ENCODE measurements at regions of chr17 and their contacts with region 1.

Region 1: DNA sequence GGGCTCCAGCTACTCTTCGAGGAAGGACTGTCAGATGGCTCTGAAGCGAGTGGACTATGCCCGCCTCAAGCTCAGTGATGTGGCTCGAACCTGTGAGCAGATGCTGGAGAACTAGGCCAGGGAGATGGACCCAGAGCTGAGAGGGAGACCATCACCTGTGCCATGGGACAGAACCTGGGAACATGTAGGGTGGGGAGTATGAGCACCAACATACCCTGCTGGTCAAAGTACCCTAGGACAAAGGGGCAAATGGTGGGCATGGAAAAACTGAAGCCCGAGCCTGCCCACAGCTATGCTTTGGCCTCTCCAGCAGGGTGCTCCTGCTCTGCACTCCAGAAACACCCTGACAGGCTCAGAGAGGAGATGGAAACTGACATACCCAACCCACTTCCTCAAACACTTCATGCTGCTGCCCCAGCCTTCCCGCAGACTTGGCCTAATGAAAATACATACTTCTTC is 1.9 kb downstream of the MED11 start:
- DNase-seq: no peak
- H3K4me3 ChIP-seq: no peak overlapping the region
- H3K27ac ChIP-seq: peak overlapping the region; percentile 16 to 40
- H3K4me1 ChIP-seq: peaks cover 6 to 9% of the 10 kb centered on the region in 2 donors
- H3K27me3 ChIP-seq: no peaks in the 10 kb centered on the region
- CTCF ChIP-seq: no peak

Region 2: DNA sequence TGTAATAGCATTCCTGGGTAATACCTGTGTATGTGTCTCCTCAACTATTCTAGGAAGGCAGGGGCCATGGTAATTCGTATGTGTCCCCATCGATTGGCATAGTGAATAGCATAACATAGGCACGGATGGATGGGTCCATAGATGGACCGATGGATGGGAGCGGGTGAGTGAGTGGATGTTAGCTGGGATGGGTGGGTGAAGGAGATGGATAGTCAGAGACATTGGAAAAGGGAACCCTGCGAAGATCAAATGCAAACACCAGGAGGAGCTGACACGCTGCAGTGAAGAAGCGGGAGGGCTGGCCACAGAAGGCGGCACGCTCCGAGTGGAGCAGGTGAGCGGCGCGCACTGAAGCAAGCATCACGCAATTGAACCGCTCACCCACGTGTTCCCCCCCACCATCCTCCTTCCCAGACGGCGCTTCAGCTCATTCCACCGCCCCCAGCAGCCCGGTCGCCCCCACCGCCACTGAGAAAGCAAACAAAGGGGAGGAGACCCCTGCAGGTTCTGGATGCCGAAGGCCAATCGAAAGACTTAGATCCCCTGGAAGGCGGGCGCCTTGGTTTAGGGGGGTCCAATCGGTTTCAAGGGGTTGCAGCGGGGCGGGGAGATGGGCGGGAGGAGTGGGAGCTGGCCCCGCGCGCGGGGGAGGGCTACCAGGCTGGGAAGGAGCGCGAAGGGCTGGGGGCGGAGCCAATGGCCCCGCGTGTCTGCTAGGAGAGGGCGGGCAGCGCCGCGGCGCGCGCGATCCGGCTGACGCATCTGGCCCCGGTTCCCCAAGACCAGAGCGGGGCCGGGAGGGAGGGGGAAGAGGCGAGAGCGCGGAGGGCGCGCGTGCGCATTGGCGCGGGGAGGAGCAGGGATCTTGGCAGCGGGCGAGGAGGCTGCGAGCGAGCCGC is 23.1 kb before region 1 on chr17 and contains the start of gene ARRB2:
- intact Hi-C with region 1: loop called (anchors 1 kb)
- DNase-seq: peak; percentile 97 to 99
- H3K4me3 ChIP-seq: peak within 1 kb of the TSS; percentile 52 to 77
- H3K27ac ChIP-seq: peak within 1 kb of the TSS; percentile 67 to 75
- H3K4me1 ChIP-seq: peaks cover 0 to 5% of the 10 kb centered on the region in 2 donors
- H3K27me3 ChIP-seq: no peaks in the 10 kb centered on the region
- CTCF ChIP-seq: peak; percentile 40 to 84 (median 62)
- total RNA-seq, gene ARRB2: 43.4 TPM

Region 3: DNA sequence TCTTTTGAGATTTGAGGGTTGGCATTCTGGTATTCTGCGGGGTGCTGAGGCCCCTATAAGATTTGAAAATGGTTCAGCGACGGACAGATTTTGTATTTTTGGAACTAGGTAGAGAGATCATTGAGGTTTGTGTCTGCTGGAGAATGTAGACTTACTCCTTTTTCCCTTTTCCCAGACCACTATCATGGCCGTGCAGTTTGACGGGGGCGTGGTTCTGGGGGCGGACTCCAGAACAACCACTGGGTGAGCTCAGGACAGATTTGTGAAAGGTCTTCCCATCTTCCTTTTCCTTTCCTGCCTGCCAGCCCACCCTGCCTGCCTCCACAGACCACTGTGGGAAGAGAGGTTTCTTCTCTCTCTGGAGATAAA is 63.4 kb after region 1 on chr17:
- intact Hi-C with region 1: loop called (anchors 2 kb)
- DNase-seq: no peak
- H3K4me3 ChIP-seq: peak overlapping the region; percentile 69 to 86
- H3K27ac ChIP-seq: peak overlapping the region; percentile 67 to 83
- H3K4me1 ChIP-seq: peaks cover 0 to 9% of the 10 kb centered on the region in 2 donors
- H3K27me3 ChIP-seq: no peaks in the 10 kb centered on the region
- CTCF ChIP-seq: no peak

Region 4: GRCh38 chr17:4823373-4824089 is 90.4 kb after region 1 on chr17:
- intact Hi-C with region 1: no loop called
- DNase-seq: no peak
- H3K4me3 ChIP-seq: no peak overlapping the region
- H3K27ac ChIP-seq: no peak overlapping the region
- H3K4me1 ChIP-seq: no peaks in the 10 kb centered on the region
- H3K27me3 ChIP-seq: no peaks in the 10 kb centered on the region
- CTCF ChIP-seq: no peak

Region 5: DNA sequence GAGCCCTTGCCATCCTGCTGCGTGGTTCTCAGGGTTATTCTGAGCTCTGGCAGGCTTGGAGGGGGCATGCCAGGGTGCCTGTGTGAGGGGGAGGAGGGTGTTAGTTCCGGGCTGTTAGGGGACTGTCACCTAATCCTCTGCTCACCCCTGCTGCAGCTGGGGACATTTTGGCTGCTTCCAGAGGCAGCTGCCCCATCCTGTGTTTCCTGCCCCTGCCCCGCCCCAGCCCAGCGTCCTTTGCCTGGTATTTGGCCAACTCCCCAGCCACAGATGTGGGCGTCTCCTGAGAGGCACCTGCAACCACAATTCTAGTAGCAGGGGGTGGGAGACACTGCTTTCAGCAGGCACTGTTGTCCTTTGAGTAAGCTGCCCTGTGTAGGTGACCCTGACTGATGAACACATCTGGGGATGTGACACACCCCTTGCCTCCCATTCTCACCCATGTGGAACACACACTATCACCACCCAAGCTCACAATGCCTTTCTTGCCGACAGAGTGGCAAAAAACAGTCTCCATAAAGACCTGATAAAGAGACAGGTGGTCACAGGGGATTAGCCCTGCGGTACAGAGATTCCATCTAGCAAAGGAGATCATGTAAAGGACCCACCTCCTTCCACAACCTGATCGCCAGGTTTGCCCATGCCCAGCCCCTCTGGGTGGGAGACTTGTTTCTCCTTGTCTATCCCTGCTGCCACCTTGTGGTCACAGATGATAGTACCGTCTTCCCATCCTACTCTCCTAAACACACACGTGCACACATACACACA is 170.1 kb after region 1 on chr17 and contains the start of gene CHRNE:
- intact Hi-C with region 1: loop called (anchors 5 kb)
- DNase-seq: peak in 1 of 2 donors; percentile 90
- H3K4me3 ChIP-seq: peak within 1 kb of the TSS in 1 of 2 donors; percentile 5
- H3K27ac ChIP-seq: peak within 1 kb of the TSS in 1 of 2 donors; percentile 11
- H3K4me1 ChIP-seq: peaks cover 3 to 6% of the 10 kb centered on the region in 2 donors
- H3K27me3 ChIP-seq: peaks cover 7% of the 10 kb centered on the region
- CTCF ChIP-seq: peak; percentile 59 to 75 (median 72)
- total RNA-seq, gene CHRNE: not detected